ENCODE measurements at regions of chr17 and their contacts with region 1.

Region 1: GRCh38 chr17:32659419-32659842 is 172.6 kb downstream of the CDK5R1 start:
- DNase-seq: peak; percentile 69 to 86 (median 78)
- ATAC-seq: peak; percentile 79
- H3K4me3 ChIP-seq: no peak overlapping the region
- H3K27ac ChIP-seq: no peak overlapping the region
- H3K4me1 ChIP-seq: peaks cover 9% of the 10 kb centered on the region
- H3K27me3 ChIP-seq: no peaks in the 10 kb centered on the region
- CTCF ChIP-seq: peak; percentile 83 to 93 (median 87)
- POLR2A ChIP-seq: no peak

Region 2: GRCh38 chr17:32723310-32723955 is 64.0 kb after region 1 on chr17:
- intact Hi-C with region 1: no loop called
- DNase-seq: no peak
- ATAC-seq: no peak
- H3K4me3 ChIP-seq: no peak overlapping the region
- H3K27ac ChIP-seq: no peak overlapping the region
- H3K4me1 ChIP-seq: no peaks in the 10 kb centered on the region
- H3K27me3 ChIP-seq: no peaks in the 10 kb centered on the region
- CTCF ChIP-seq: no peak
- POLR2A ChIP-seq: no peak

Region 3: GRCh38 chr17:32755045-32755805 is 95.8 kb after region 1 on chr17:
- intact Hi-C with region 1: loop called (anchors 10 kb)
- DNase-seq: no peak
- ATAC-seq: peak; percentile 99
- H3K4me3 ChIP-seq: no peak overlapping the region
- H3K27ac ChIP-seq: peak overlapping the region in 2 of 4 donors; percentile 47 to 54
- H3K4me1 ChIP-seq: peaks cover 8% of the 10 kb centered on the region
- H3K27me3 ChIP-seq: no peaks in the 10 kb centered on the region
- CTCF ChIP-seq: peak; percentile 11 to 85 (median 74)
- POLR2A ChIP-seq: no peak